ENCODE measurements at regions of chr5 and their contacts with region 1.

Region 1: GRCh38 chr5:38809388-38810359 is 36.1 kb upstream of the OSMR start:
- DNase-seq: peak; percentile 87
- H3K4me3 ChIP-seq: no peak overlapping the region
- H3K27ac ChIP-seq: no peak overlapping the region
- H3K4me1 ChIP-seq: peaks cover 31% of the 10 kb centered on the region
- H3K27me3 ChIP-seq: no peaks in the 10 kb centered on the region
- CTCF ChIP-seq: peak; percentile 81 to 83
- POLR2A ChIP-seq: no peak

Region 2: DNA sequence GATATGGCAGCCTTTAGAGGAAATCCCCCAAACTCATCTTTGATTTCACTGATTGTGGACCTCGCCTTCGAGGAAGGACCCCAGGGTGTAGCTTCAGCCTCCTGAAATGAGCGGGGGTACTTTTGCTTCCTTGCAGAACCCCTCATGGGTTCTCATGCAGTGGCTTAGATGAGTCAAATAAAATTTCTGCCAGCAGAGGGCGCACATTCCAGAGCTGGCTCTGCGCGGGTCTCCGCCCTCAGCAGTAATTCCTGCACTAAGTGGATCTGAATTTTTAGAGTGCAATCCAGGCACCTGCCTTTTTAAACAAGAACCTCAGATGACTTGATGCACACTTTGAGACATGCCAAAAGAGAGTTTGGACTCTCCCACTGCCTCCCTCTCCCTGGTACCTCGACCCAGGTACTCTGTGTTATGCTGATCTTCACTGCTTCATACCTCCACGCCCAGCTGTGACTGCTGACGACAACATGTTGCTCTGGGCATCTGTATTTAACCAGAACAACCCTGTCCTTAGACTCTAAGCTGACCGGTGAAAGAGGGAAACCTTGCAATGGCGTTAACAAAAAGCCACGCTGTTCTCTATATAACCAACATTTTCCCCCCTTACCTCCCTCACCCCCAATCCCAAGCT is 544.0 kb before region 1 on chr5:
- CTCF ChIA-PET with region 1: interaction called, 124 read pairs
- POLR2A ChIA-PET with region 1: no interaction called
- dilution Hi-C with region 1: no loop called
- intact Hi-C with region 1: no loop called
- DNase-seq: peak; percentile 56
- H3K4me3 ChIP-seq: no peak overlapping the region
- H3K27ac ChIP-seq: no peak overlapping the region
- H3K4me1 ChIP-seq: no peaks in the 10 kb centered on the region
- H3K27me3 ChIP-seq: peaks cover 19 to 26% of the 10 kb centered on the region in 2 experiments
- CTCF ChIP-seq: peak; percentile 73 to 78
- POLR2A ChIP-seq: no peak

Region 3: GRCh38 chr5:38453506-38453905 is 356.2 kb before region 1 on chr5:
- CTCF ChIA-PET with region 1: interaction called, 10 read pairs
- POLR2A ChIA-PET with region 1: no interaction called
- dilution Hi-C with region 1: loop called (anchors 25 kb)
- intact Hi-C with region 1: no loop called
- DNase-seq: no peak
- H3K4me3 ChIP-seq: no peak overlapping the region
- H3K27ac ChIP-seq: no peak overlapping the region
- H3K4me1 ChIP-seq: no peaks in the 10 kb centered on the region
- H3K27me3 ChIP-seq: no peaks in the 10 kb centered on the region
- CTCF ChIP-seq: no peak
- POLR2A ChIP-seq: no peak

Region 4: GRCh38 chr5:38551030-38552017 is 258.4 kb before region 1 on chr5:
- CTCF ChIA-PET with region 1: interaction called, 21 read pairs
- POLR2A ChIA-PET with region 1: no interaction called
- dilution Hi-C with region 1: no loop called
- intact Hi-C with region 1: no loop called
- DNase-seq: peak; percentile 59
- H3K4me3 ChIP-seq: no peak overlapping the region
- H3K27ac ChIP-seq: no peak overlapping the region
- H3K4me1 ChIP-seq: peaks cover 27% of the 10 kb centered on the region
- H3K27me3 ChIP-seq: no peaks in the 10 kb centered on the region
- CTCF ChIP-seq: peak; percentile 57 to 61
- POLR2A ChIP-seq: no peak

Region 5: GRCh38 chr5:38666668-38667498 is 142.8 kb before region 1 on chr5:
- CTCF ChIA-PET with region 1: interaction called, 65 read pairs
- POLR2A ChIA-PET with region 1: no interaction called
- dilution Hi-C with region 1: no loop called
- intact Hi-C with region 1: loop called (anchors 1 kb)
- DNase-seq: peak; percentile 67
- H3K4me3 ChIP-seq: no peak overlapping the region
- H3K27ac ChIP-seq: no peak overlapping the region
- H3K4me1 ChIP-seq: peaks cover 5% of the 10 kb centered on the region
- H3K27me3 ChIP-seq: no peaks in the 10 kb centered on the region
- CTCF ChIP-seq: peak; percentile 65 to 82
- POLR2A ChIP-seq: no peak

Region 6: GRCh38 chr5:38795986-38796741 is 13.5 kb before region 1 on chr5:
- CTCF ChIA-PET with region 1: interaction called, 25 read pairs
- POLR2A ChIA-PET with region 1: no interaction called
- dilution Hi-C with region 1: no loop called
- intact Hi-C with region 1: no loop called
- DNase-seq: peak; percentile 79
- H3K4me3 ChIP-seq: peak overlapping the region in 1 of 3 experiments; percentile 22
- H3K27ac ChIP-seq: peak overlapping the region; percentile 37
- H3K4me1 ChIP-seq: peaks cover 15% of the 10 kb centered on the region
- H3K27me3 ChIP-seq: no peaks in the 10 kb centered on the region
- CTCF ChIP-seq: no peak
- POLR2A ChIP-seq: no peak

Measured in endothelial cell of umbilical vein (primary cell).